HepG2 (cell line): ENCODE measurements at regions of chr10 and their contacts with region 1.

Region 1: GRCh38 chr10:79562135-79562756 is 2.0 kb upstream of the SFTPA2 start:
- DNase-seq: peak; percentile 36
- ATAC-seq: peak; percentile 95
- H3K4me3 ChIP-seq: peak overlapping the region in 1 of 3 experiments; percentile 45; a peak in 1 of 6 replicates
- H3K27ac ChIP-seq: no peak overlapping the region
- H3K4me1 ChIP-seq: peaks cover 9% of the 10 kb centered on the region; the same call in 1 of the 2 replicates
- H3K27me3 ChIP-seq: peaks cover 0 to 27% of the 10 kb centered on the region in 2 experiments; a peak in 4 of 5 replicates
- CTCF ChIP-seq: peak; percentile 92
- EP300 ChIP-seq: no peak
- POLR2A ChIP-seq: no peak
- RAD21 ChIP-seq: peak; percentile 50; the same call in 1 of the 2 replicates

Region 2: DNA sequence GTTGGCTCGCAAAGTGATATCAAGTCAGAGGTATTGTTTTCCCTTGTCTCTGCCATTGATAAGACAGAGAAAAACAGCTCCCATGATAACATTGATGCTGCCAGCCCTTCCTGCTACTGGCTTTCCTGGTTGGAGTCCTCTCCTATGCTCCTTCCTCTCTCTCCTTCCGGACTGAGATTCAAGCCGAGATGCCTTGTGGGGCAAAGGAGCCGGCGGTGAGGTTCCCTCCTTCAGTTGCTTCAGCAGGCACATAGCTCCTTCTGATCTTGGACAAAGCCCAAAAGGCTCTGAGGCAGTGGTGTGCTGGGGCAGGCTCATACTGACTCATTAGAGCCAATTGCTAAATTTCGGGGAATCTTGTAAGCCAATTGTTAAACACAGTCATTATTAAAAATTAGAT is 108.0 kb before region 1 on chr10:
- CTCF ChIA-PET with region 1: no interaction called
- POLR2A ChIA-PET with region 1: no interaction called
- in situ Hi-C with region 1: no loop called
- intact Hi-C with region 1: no loop called
- DNase-seq: no peak
- ATAC-seq: no peak
- H3K4me3 ChIP-seq: no peak overlapping the region
- H3K27ac ChIP-seq: no peak overlapping the region
- H3K4me1 ChIP-seq: peaks cover 31% of the 10 kb centered on the region
- H3K27me3 ChIP-seq: peaks cover 0 to 16% of the 10 kb centered on the region in 2 experiments; a peak in 3 of 5 replicates
- CTCF ChIP-seq: no peak
- EP300 ChIP-seq: no peak
- POLR2A ChIP-seq: no peak
- RAD21 ChIP-seq: no peak

Region 3: DNA sequence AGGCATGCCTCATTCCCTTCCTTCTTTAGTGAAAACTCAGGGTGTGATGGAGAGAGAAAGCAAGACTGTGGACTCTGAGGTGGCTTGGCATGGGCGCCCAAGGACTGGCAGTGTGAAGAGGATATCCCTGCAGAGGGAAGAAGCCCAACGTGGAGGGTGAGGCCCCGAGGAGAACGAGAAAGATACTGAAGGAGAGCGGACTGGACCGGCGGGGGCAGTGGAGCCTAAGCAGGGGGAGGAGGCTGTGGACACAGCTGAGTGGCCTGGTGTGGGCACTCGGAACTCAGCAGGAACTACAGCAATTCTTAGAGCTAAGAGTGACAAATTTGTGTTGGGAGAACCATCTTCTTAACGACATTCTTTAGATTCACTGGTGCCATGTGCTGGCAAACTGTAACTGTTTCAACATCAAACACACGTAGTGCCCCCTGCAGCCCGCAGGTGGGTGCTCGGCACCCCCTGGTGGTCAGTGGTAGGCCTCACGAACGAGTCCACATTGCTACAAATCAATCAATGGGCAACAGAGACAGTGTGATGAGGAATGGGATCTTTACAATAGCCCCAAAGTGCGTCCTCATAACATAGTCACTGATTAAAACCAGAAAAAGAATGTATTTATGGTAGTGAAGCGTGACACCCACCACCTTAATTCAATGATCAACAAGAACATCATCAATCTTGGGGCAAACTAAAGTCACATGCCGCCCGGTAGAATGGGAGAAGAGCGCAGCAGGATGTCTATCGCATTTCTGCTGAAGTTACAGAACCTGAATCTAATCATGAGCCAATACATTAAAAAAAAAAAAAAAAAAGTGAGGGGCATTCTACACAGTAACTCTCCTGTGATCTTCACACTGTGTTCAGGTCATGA is 46.5 kb after region 1 on chr10:
- CTCF ChIA-PET with region 1: interaction called, 13 read pairs
- POLR2A ChIA-PET with region 1: no interaction called
- in situ Hi-C with region 1: loop called (anchors 5 kb)
- intact Hi-C with region 1: loop called (anchors 1 kb)
- DNase-seq: peak; percentile 46
- ATAC-seq: peak; percentile 93
- H3K4me3 ChIP-seq: no peak overlapping the region
- H3K27ac ChIP-seq: no peak overlapping the region
- H3K4me1 ChIP-seq: no peaks in the 10 kb centered on the region
- H3K27me3 ChIP-seq: peaks cover 0 to 12% of the 10 kb centered on the region in 2 experiments; a peak in 3 of 5 replicates
- CTCF ChIP-seq: peak; percentile 82
- EP300 ChIP-seq: no peak
- POLR2A ChIP-seq: no peak
- RAD21 ChIP-seq: peak; percentile 79

Region 4: GRCh38 chr10:79929409-79929904 is 367.2 kb after region 1 on chr10:
- CTCF ChIA-PET with region 1: interaction called, 9 read pairs
- POLR2A ChIA-PET with region 1: no interaction called
- in situ Hi-C with region 1: loop called (anchors 25 kb)
- intact Hi-C with region 1: loop called (anchors 1 kb)
- DNase-seq: peak; percentile 59
- ATAC-seq: peak; percentile 82
- H3K4me3 ChIP-seq: no peak overlapping the region
- H3K27ac ChIP-seq: no peak overlapping the region
- H3K4me1 ChIP-seq: peaks cover 46% of the 10 kb centered on the region
- H3K27me3 ChIP-seq: peaks cover 3 to 34% of the 10 kb centered on the region in 2 experiments; a peak in 3 of 5 replicates
- CTCF ChIP-seq: peak; percentile 97
- EP300 ChIP-seq: no peak
- POLR2A ChIP-seq: no peak
- RAD21 ChIP-seq: peak; percentile 89